ENCODE measurements at regions of chr5 and their contacts with region 1.

Region 1: DNA sequence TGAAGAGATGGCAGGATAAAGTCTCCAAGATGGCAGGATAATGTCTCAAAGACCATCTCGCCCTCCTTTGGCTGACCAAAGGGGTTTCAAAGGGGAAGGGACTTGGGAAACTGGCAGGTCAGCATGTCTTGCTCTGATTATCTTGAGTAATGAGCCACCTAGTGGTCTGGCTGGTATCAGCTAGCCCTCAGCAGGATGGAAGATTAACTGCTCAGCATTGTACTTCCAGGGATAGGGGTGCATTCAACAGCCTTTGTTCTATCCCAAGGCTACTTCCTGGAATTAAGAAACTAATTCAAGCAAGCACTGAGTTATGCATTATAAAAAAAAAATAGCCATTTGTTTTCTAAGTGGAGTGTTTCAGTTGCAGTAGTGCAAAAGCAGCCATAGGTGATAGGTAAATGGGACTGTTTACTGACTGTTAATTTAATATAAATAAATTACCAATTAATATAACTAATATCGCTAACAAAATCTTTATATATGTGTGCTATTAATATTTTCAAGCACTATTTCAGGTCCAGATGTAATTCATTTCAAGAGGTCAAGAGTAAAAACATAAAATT is 555.5 kb downstream of the CDH9 start:
- DNase-seq: no peak
- ATAC-seq: peak; percentile 99
- H3K4me3 ChIP-seq: no peak overlapping the region
- H3K27ac ChIP-seq: no peak overlapping the region
- H3K4me1 ChIP-seq: no peaks in the 10 kb centered on the region
- H3K27me3 ChIP-seq: no peaks in the 10 kb centered on the region
- CTCF ChIP-seq: peak; percentile 29 to 71 (median 54); a peak in 4 of 6 replicates
- EP300 ChIP-seq: no peak
- POLR2A ChIP-seq: no peak
- RAD21 ChIP-seq: peak; percentile 56

Region 2: GRCh38 chr5:24633712-24634325 is 1849.1 kb before region 1 on chr5:
- CTCF ChIA-PET with region 1: interaction called, 4 read pairs
- POLR2A ChIA-PET with region 1: no interaction called
- RAD21 ChIA-PET with region 1: no interaction called
- SMC1A ChIA-PET with region 1: no interaction called
- in situ Hi-C with region 1: no loop called
- intact Hi-C with region 1: loop called (anchors 2 kb)
- DNase-seq: no peak
- ATAC-seq: peak; percentile 51; the same call in 2 of the 3 replicates
- H3K4me3 ChIP-seq: no peak overlapping the region
- H3K27ac ChIP-seq: no peak overlapping the region
- H3K4me1 ChIP-seq: no peaks in the 10 kb centered on the region
- H3K27me3 ChIP-seq: no peaks in the 10 kb centered on the region
- CTCF ChIP-seq: peak; percentile 36 to 56 (median 56); a peak in 5 of 6 replicates
- EP300 ChIP-seq: no peak
- POLR2A ChIP-seq: no peak
- RAD21 ChIP-seq: peak; percentile 67

Region 3: GRCh38 chr5:25544652-25545249 is 938.1 kb before region 1 on chr5:
- CTCF ChIA-PET with region 1: no interaction called
- POLR2A ChIA-PET with region 1: no interaction called
- RAD21 ChIA-PET with region 1: no interaction called
- SMC1A ChIA-PET with region 1: no interaction called
- in situ Hi-C with region 1: no loop called
- intact Hi-C with region 1: loop called (anchors 10 kb)
- DNase-seq: peak; percentile 13
- ATAC-seq: peak; percentile 89
- H3K4me3 ChIP-seq: no peak overlapping the region
- H3K27ac ChIP-seq: no peak overlapping the region
- H3K4me1 ChIP-seq: no peaks in the 10 kb centered on the region
- H3K27me3 ChIP-seq: no peaks in the 10 kb centered on the region
- CTCF ChIP-seq: peak; percentile 48 to 63 (median 56); a peak in 4 of 6 replicates
- EP300 ChIP-seq: no peak
- POLR2A ChIP-seq: no peak
- RAD21 ChIP-seq: no peak

Region 4: GRCh38 chr5:26024774-26025173 is 458.1 kb before region 1 on chr5:
- CTCF ChIA-PET with region 1: interaction called, 4 read pairs
- POLR2A ChIA-PET with region 1: no interaction called
- RAD21 ChIA-PET with region 1: interaction called, 4 read pairs
- SMC1A ChIA-PET with region 1: interaction called, 4 read pairs
- in situ Hi-C with region 1: no loop called
- intact Hi-C with region 1: loop called (anchors 5 kb)
- DNase-seq: no peak
- ATAC-seq: no peak
- H3K4me3 ChIP-seq: no peak overlapping the region
- H3K27ac ChIP-seq: no peak overlapping the region
- H3K4me1 ChIP-seq: no peaks in the 10 kb centered on the region
- H3K27me3 ChIP-seq: no peaks in the 10 kb centered on the region
- CTCF ChIP-seq: no peak
- EP300 ChIP-seq: no peak
- POLR2A ChIP-seq: no peak
- RAD21 ChIP-seq: no peak

Region 5: GRCh38 chr5:26700759-26701384 is 218.0 kb after region 1 on chr5:
- CTCF ChIA-PET with region 1: interaction called, 8 read pairs
- POLR2A ChIA-PET with region 1: no interaction called
- RAD21 ChIA-PET with region 1: interaction called, 8 read pairs
- SMC1A ChIA-PET with region 1: interaction called, 8 read pairs
- in situ Hi-C with region 1: no loop called
- intact Hi-C with region 1: loop called (anchors 5 kb)
- DNase-seq: no peak
- ATAC-seq: peak; percentile 76
- H3K4me3 ChIP-seq: no peak overlapping the region
- H3K27ac ChIP-seq: no peak overlapping the region
- H3K4me1 ChIP-seq: no peaks in the 10 kb centered on the region
- H3K27me3 ChIP-seq: no peaks in the 10 kb centered on the region
- CTCF ChIP-seq: peak; percentile 32 to 55 (median 33); a peak in 5 of 6 replicates
- EP300 ChIP-seq: no peak
- POLR2A ChIP-seq: no peak
- RAD21 ChIP-seq: peak; percentile 47

Region 6: GRCh38 chr5:26761045-26761444 is 278.2 kb after region 1 on chr5:
- CTCF ChIA-PET with region 1: no interaction called
- POLR2A ChIA-PET with region 1: no interaction called
- RAD21 ChIA-PET with region 1: no interaction called
- SMC1A ChIA-PET with region 1: no interaction called
- in situ Hi-C with region 1: no loop called
- intact Hi-C with region 1: no loop called
- DNase-seq: no peak
- ATAC-seq: no peak
- H3K4me3 ChIP-seq: no peak overlapping the region
- H3K27ac ChIP-seq: no peak overlapping the region
- H3K4me1 ChIP-seq: no peaks in the 10 kb centered on the region
- H3K27me3 ChIP-seq: no peaks in the 10 kb centered on the region
- CTCF ChIP-seq: no peak
- EP300 ChIP-seq: no peak
- POLR2A ChIP-seq: no peak
- RAD21 ChIP-seq: no peak

Measured in GM12878 (cell line).